ENCODE measurements at regions of chr7 and their contacts with region 1.

Region 1: GRCh38 chr7:158595069-158595468 is 7.4 kb upstream of the PTPRN2 start:
- DNase-seq: no peak
- H3K4me3 ChIP-seq: no peak overlapping the region
- H3K27ac ChIP-seq: no peak overlapping the region
- H3K4me1 ChIP-seq: no peaks in the 10 kb centered on the region
- H3K27me3 ChIP-seq: peaks cover 0 to 8% (median 0%) of the 10 kb centered on the region in 4 donors
- CTCF ChIP-seq: no peak
- POLR2A ChIP-seq: no peak

Region 2: DNA sequence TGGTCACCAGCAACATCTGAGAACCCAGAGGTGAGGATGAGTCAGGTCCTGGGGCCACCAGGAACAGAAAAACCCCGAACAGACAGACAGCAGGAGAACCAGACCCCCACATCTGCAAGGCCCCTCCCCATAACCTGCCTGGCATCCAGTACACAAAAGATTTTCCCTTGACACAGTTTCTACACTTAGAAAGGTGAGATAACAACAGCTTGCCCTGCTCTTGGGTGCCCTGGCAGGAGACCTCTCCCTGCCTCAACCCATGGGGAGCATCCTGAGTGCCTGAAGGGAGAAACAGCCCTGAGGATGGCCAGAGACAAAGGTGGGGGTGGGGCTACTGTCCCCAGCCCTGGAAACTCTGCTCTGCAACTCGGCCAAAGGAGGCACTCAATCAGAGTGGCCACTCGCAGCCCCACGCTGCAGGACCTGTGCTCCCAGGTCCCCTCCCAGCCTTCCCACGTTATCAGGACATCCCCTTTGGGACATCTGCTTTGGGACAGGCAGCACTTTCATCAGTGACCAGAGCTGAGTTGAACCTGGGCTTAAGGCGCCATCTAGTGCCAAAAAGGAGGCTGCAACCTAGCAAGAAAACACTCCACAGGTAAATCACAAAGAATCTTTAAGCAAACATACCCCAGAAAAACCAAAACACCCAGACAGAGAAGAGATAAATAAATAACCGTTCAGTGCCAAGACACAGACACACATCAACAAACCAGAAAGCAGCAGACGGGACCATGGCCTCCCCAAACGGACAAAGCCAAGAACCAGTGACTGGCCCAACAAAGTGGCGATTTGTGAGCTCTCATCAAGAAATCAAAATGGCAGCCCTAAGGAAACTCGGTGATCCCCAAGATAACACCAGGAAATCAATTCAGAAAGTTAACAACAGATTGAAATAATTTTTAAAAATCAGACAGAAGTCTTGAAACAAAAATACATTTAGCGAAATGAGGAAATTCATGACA is 241.2 kb before region 1 on chr7:
- intact Hi-C with region 1: no loop called
- DNase-seq: no peak
- H3K4me3 ChIP-seq: no peak overlapping the region
- H3K27ac ChIP-seq: no peak overlapping the region
- H3K4me1 ChIP-seq: no peaks in the 10 kb centered on the region
- H3K27me3 ChIP-seq: peaks cover 0 to 20% (median 0%) of the 10 kb centered on the region in 4 donors
- CTCF ChIP-seq: peak in 5 of 6 experiments; percentile 32 to 67 (median 37)
- POLR2A ChIP-seq: no peak

Region 3: GRCh38 chr7:158536871-158537515 is 58.1 kb before region 1 on chr7:
- intact Hi-C with region 1: loop called (anchors 10 kb)
- DNase-seq: no peak
- H3K4me3 ChIP-seq: no peak overlapping the region
- H3K27ac ChIP-seq: no peak overlapping the region
- H3K4me1 ChIP-seq: no peaks in the 10 kb centered on the region
- H3K27me3 ChIP-seq: peaks cover 0 to 10% (median 0%) of the 10 kb centered on the region in 4 donors
- CTCF ChIP-seq: no peak
- POLR2A ChIP-seq: no peak

Region 4: GRCh38 chr7:158868476-158869420 is 273.7 kb after region 1 on chr7:
- intact Hi-C with region 1: no loop called
- DNase-seq: no peak
- H3K4me3 ChIP-seq: no peak overlapping the region
- H3K27ac ChIP-seq: no peak overlapping the region
- H3K4me1 ChIP-seq: peaks cover 0 to 18% (median 4%) of the 10 kb centered on the region in 3 donors
- H3K27me3 ChIP-seq: no peaks in the 10 kb centered on the region
- CTCF ChIP-seq: no peak
- POLR2A ChIP-seq: no peak

Measured in esophagus squamous epithelium (tissue), 5 donors.